Activated CD8-positive, alpha-beta T cell treated with anti-CD3 and anti-CD28 coated beads for 36 hours (primary cell): ENCODE measurements at regions of chr9 and their contacts with region 1.

Region 1: GRCh38 chr9:134378901-134379338 is 52.7 kb downstream of the RXRA start:
- DNase-seq: no peak
- ATAC-seq: no peak
- H3K4me3 Mint-ChIP-seq: no peak overlapping the region
- H3K27ac Mint-ChIP-seq: no peak overlapping the region
- H3K4me1 Mint-ChIP-seq: peaks cover 22% of the 10 kb centered on the region
- H3K27me3 Mint-ChIP-seq: no peaks in the 10 kb centered on the region
- CTCF ChIP-seq: no peak

Region 2: DNA sequence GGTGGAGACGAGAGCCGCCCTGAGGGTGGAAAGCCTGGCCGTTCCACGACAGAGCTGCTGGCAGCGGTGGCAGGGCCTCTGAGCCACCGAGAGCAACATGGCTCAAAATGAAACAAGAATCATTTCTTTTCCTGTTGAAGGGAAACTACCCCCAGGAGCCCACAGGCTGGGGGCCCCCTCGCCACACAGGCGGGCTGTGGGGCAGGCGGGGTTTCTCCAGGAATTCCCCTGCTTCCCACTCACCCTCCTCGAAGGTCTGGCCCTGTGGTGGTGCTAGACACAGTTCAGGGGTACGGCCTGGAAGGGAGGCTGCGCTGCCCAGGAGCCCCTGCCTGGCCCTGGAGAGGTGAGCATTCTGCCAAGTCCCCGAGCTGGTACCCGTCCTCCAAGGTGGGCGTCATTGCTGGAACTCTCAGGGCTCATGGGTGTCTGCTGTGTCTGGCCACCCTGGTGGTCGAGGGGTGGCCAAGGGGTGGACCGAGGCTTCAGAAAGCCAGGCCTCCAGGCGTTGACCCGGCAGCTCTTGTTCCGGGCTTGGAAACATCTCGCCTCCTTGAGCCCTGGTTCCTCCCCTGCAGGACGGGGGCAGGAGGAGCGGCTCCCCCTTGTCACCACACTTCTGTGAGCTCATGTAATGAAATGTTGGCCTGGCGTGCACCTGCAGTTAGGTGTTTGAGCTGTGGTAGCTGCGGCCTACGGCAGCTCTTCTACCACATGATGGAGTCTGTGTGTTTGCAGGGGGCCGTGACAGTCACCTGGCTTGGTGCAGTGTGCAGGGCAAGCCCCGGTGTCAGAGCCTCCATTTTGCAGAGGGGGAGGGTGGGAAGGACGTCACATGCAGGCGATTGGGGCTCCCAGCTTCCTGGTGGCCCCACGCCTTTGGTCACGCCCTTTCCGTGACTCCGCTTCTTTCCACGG is 12.7 kb after region 1 on chr9:
- CTCF ChIA-PET with region 1: interaction called, 5 read pairs
- POLR2A ChIA-PET with region 1: interaction called, 10 read pairs
- intact Hi-C with region 1: no loop called
- DNase-seq: peak; percentile 92
- ATAC-seq: peak; percentile 57
- H3K4me3 Mint-ChIP-seq: peak overlapping the region; percentile 77
- H3K27ac Mint-ChIP-seq: peak overlapping the region; percentile 99
- H3K4me1 Mint-ChIP-seq: peaks cover 65% of the 10 kb centered on the region
- H3K27me3 Mint-ChIP-seq: peaks cover 4% of the 10 kb centered on the region
- CTCF ChIP-seq: no peak

Region 3: DNA sequence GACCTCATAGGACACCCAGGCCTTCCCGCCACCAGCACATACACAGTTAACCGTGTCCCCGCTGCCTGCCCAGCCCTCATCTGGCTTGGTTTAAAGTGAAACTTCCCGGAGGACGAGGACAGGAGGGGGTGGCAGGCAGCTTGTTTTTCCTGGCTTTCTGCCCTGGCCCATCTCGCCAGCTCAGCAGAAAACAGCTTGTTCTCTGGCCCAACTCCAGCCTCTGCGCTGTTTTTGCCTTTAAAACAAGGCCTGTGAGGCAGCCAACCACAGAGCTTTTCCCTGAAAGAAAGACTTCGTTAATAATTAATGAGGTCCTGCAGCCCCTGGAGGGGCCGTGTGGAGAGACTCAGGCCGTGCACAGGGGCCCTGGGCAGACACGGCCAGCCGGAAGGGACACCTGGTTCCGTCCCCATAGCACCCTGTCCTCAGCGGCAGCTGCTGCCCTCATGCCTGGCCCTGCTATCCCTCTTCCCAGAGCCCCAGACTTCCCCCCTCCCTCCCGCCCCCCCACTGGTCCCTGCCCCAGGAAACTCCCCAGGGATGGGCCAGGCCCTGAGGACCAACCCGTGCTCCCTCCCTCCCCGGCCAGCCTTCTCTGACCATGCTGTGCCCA is 56.1 kb after region 1 on chr9:
- CTCF ChIA-PET with region 1: interaction called, 4 read pairs
- POLR2A ChIA-PET with region 1: no interaction called
- intact Hi-C with region 1: loop called (anchors 5 kb)
- DNase-seq: no peak
- ATAC-seq: no peak
- H3K4me3 Mint-ChIP-seq: no peak overlapping the region
- H3K27ac Mint-ChIP-seq: no peak overlapping the region
- H3K4me1 Mint-ChIP-seq: no peaks in the 10 kb centered on the region
- H3K27me3 Mint-ChIP-seq: no peaks in the 10 kb centered on the region
- CTCF ChIP-seq: no peak